ENCODE measurements at regions of chr9 and their contacts with region 1.

Region 1: GRCh38 chr9:5437254-5438216 is at the start of gene PLGRKT:
- DNase-seq: peak; percentile 91 to 97
- ATAC-seq: peak; percentile 96 to 98
- H3K4me3 ChIP-seq: peak within 1 kb of the TSS; percentile 56 to 93 (median 74)
- H3K27ac ChIP-seq: peak within 1 kb of the TSS; percentile 87 to 97 (median 93)
- H3K4me1 ChIP-seq: peaks cover 14 to 17% of the 10 kb centered on the region in 2 donors
- H3K27me3 ChIP-seq: no peaks in the 10 kb centered on the region
- CTCF ChIP-seq: peak in 2 of 5 experiments; percentile 36 to 49
- POLR2A ChIP-seq: peak; percentile 78 to 86
- total RNA-seq, gene PLGRKT: 12.3 to 38.1 (median 15.1) TPM

Region 2: GRCh38 chr9:4679268-4680172 is 758.0 kb before region 1 on chr9 and contains the start of gene CDC37L1:
- in situ Hi-C with region 1: loop called in 1 of 4 experiments (anchors 25 kb)
- intact Hi-C with region 1: no loop called
- DNase-seq: peak; percentile 95 to 96
- ATAC-seq: peak; percentile 76 to 84
- H3K4me3 ChIP-seq: peak within 1 kb of the TSS; percentile 81 to 98 (median 88)
- H3K27ac ChIP-seq: peak within 1 kb of the TSS; percentile 91 to 99 (median 95)
- H3K4me1 ChIP-seq: peaks cover 40 to 44% of the 10 kb centered on the region in 2 donors
- H3K27me3 ChIP-seq: no peaks in the 10 kb centered on the region
- CTCF ChIP-seq: peak; percentile 72 to 88 (median 81)
- POLR2A ChIP-seq: peak; percentile 98 to 99
- total RNA-seq, gene CDC37L1: 91.1 to 157 (median 131) TPM

Region 3: GRCh38 chr9:4762108-4762885 is 675.2 kb before region 1 on chr9:
- in situ Hi-C with region 1: loop called in 3 of 4 experiments (anchors 25 kb)
- intact Hi-C with region 1: no loop called
- DNase-seq: peak; percentile 42 to 65
- ATAC-seq: peak; percentile 69 to 80
- H3K4me3 ChIP-seq: peak overlapping the region; percentile 26 to 48 (median 32)
- H3K27ac ChIP-seq: peak overlapping the region; percentile 39 to 50 (median 40)
- H3K4me1 ChIP-seq: peaks cover 9 to 13% of the 10 kb centered on the region in 2 donors
- H3K27me3 ChIP-seq: no peaks in the 10 kb centered on the region
- CTCF ChIP-seq: peak; percentile 78 to 87 (median 81)
- POLR2A ChIP-seq: no peak

Region 4: DNA sequence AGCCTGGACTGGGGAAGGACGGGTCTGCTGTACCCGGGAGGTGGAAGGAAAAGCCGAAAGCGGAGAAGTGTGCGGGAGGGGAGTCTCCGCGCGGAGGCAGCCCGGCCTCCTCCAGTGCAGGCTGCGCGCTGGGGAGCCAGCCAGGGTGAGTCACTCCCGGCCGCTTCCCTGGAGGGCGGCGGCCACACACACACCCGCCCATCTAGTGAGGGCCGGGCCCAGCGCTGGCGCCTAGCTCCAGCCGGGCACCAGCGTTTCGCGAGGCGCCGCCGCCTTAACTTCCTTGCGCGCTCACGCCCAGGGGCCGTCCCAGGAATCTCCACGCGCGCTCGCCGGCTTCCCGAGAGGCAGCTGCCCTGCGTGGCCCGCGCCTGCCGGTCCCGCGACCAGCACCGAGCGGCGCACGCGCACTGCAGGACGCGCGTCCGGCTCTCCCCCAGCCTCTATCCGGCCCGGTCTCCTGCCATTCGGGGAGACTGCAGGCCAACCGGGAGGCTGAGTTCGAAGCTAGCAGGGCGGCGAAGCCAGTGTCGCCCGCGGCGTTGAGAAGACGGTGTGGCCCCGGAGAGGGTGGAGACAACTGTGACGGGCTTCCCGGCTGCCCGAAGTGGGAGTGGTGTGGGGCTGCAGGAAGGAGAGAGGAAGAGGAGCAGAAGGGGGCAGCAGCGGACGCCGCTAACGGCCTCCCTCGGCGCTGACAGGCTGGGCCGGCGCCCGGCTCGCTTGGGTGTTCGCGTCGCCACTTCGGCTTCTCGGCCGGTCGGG is 452.7 kb before region 1 on chr9 and contains the start of gene JAK2:
- in situ Hi-C with region 1: no loop called
- intact Hi-C with region 1: loop called (anchors 10 kb)
- DNase-seq: peak; percentile 84 to 86
- ATAC-seq: peak; percentile 84 to 85
- H3K4me3 ChIP-seq: peak within 1 kb of the TSS; percentile 73 to 86 (median 79)
- H3K27ac ChIP-seq: peak within 1 kb of the TSS; percentile 93 to 98 (median 95)
- H3K4me1 ChIP-seq: peaks cover 35 to 51% of the 10 kb centered on the region in 2 donors
- H3K27me3 ChIP-seq: no peaks in the 10 kb centered on the region
- CTCF ChIP-seq: peak in 4 of 5 experiments; percentile 10 to 44 (median 38)
- POLR2A ChIP-seq: peak; percentile 76 to 85
- total RNA-seq, gene JAK2: 4.6 to 16.5 (median 9.0) TPM

Region 5: GRCh38 chr9:5450359-5451091 is 13.0 kb after region 1 on chr9 and contains the start of gene CD274:
- in situ Hi-C with region 1: no loop called
- intact Hi-C with region 1: loop called (anchors 2 kb)
- DNase-seq: peak; percentile 74 to 91
- ATAC-seq: peak; percentile 86 to 92
- H3K4me3 ChIP-seq: peak within 1 kb of the TSS; percentile 60 to 82 (median 66)
- H3K27ac ChIP-seq: peak within 1 kb of the TSS; percentile 71 to 90 (median 80)
- H3K4me1 ChIP-seq: peaks cover 22 to 27% of the 10 kb centered on the region in 2 donors
- H3K27me3 ChIP-seq: no peaks in the 10 kb centered on the region
- CTCF ChIP-seq: peak; percentile 73 to 91 (median 88)
- POLR2A ChIP-seq: peak; percentile 40 to 50
- total RNA-seq, gene CD274: 0.61 to 7.2 (median 1.6) TPM

Region 6: GRCh38 chr9:6197330-6197729 is 759.8 kb after region 1 on chr9:
- in situ Hi-C with region 1: no loop called
- intact Hi-C with region 1: no loop called
- DNase-seq: no peak
- ATAC-seq: no peak
- H3K4me3 ChIP-seq: no peak overlapping the region
- H3K27ac ChIP-seq: no peak overlapping the region
- H3K4me1 ChIP-seq: no peaks in the 10 kb centered on the region
- H3K27me3 ChIP-seq: no peaks in the 10 kb centered on the region
- CTCF ChIP-seq: peak in 3 of 5 experiments; percentile 6 to 47 (median 25)
- POLR2A ChIP-seq: no peak